ENCODE measurements at regions of chr5 and their contacts with region 1.

Region 1: DNA sequence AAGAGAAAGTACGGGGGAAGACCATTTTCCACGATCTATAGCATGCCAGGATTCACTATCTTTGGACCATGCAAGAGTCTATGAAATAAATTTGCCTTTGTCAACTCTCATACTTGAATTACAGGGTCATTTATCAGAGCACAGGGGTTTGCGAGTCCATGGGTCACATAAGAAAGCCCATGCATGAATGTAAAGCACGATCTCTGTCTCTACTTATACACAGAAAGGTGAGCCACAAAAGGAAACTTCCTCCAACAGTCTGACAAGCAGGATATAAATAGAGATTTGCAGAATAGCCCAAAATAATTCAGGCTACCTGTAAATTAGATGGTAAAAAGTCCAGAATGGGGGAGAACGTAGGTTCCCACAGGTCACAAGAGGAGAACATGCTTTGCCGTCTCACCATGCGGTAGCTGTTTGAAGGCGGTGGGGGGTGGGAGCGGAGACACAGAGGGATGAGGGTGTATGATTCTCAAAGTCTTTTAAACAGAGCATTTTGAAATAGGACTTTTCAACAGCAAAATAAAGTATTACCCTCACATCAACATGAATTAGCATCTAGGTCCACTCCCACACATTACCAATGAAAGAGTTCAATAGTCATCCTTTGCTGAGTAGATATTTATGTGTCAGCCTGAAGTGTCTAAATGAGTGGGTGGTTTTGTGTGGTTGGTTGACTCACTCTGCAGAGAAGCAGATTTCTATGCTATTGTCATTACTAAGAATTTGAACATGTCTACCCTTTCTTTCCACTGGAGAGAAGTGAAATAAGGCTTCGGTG is 279.7 kb downstream of the EBF1 start:
- DNase-seq: peak; percentile 77
- ATAC-seq: peak; percentile 90
- H3K4me3 ChIP-seq: peak overlapping the region; percentile 53
- H3K27ac ChIP-seq: peak overlapping the region; percentile 83
- H3K4me1 ChIP-seq: peaks cover 50% of the 10 kb centered on the region
- H3K27me3 ChIP-seq: no peaks in the 10 kb centered on the region
- CTCF ChIP-seq: no peak
- EP300 ChIP-seq: peak in 1 of 2 experiments; percentile 5; a peak in 1 of 4 replicates
- POLR2A ChIP-seq: no peak
- RAD21 ChIP-seq: peak; percentile 10; the same call in 1 of the 2 replicates

Region 2: GRCh38 chr5:158780656-158781237 is 39.3 kb before region 1 on chr5:
- CTCF ChIA-PET with region 1: interaction called, 7 read pairs
- POLR2A ChIA-PET with region 1: interaction called, 31 read pairs
- RAD21 ChIA-PET with region 1: interaction called, 19 read pairs
- SMC1A ChIA-PET with region 1: interaction called, 18 read pairs
- in situ Hi-C with region 1: no loop called
- intact Hi-C with region 1: no loop called
- DNase-seq: peak; percentile 28
- ATAC-seq: peak; percentile 85
- H3K4me3 ChIP-seq: no peak overlapping the region
- H3K27ac ChIP-seq: peak overlapping the region; percentile 46
- H3K4me1 ChIP-seq: peaks cover 18% of the 10 kb centered on the region
- H3K27me3 ChIP-seq: no peaks in the 10 kb centered on the region
- CTCF ChIP-seq: no peak
- EP300 ChIP-seq: no peak
- POLR2A ChIP-seq: no peak
- RAD21 ChIP-seq: no peak

Region 3: DNA sequence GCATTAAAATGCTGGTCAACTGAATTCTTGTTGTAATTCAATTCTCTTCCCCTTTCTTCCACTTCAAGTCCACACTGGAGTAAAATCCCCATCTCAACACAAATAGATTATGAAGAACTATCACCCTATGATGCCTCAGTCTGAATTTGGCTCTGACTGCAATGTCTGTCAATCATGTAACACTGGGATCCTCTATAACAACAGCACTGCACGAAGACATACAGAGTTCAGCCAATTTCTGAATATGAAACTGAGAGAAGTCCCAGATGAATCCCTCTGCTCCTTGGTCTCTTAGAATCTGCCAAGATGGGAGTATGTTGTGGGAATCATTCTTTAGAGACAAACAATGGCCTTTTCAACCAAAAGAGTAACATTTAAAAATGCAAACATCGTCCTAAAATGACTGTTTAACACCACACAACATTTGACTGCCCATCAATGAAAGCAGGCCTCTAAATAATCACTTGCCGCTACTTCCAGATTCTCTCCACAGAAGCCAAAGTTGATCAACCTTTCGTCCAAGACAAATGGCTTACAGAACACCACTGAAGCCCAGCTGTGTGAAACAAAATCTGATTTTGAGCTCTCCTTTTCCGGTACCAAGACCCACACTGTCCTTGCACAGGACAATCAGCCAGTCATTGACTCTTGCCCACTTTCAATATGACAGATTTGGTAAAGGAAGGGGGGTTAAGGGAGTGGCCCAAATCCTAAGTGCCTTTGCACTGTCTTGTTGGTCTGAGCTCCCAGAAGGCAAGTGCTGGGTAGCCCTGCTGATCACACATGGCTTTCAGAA is 21.6 kb after region 1 on chr5:
- CTCF ChIA-PET with region 1: interaction called, 7 read pairs
- POLR2A ChIA-PET with region 1: interaction called, 9 read pairs
- RAD21 ChIA-PET with region 1: interaction called, 7 read pairs
- SMC1A ChIA-PET with region 1: interaction called, 33 read pairs
- in situ Hi-C with region 1: no loop called
- intact Hi-C with region 1: loop called (anchors 2 kb)
- DNase-seq: peak; percentile 80
- ATAC-seq: peak; percentile 97
- H3K4me3 ChIP-seq: no peak overlapping the region
- H3K27ac ChIP-seq: peak overlapping the region; percentile 15
- H3K4me1 ChIP-seq: peaks cover 22% of the 10 kb centered on the region
- H3K27me3 ChIP-seq: no peaks in the 10 kb centered on the region
- CTCF ChIP-seq: no peak
- EP300 ChIP-seq: no peak
- POLR2A ChIP-seq: no peak
- RAD21 ChIP-seq: 0 out of 2 replicates have a peak, but pooled peaks have one; percentile 5

Region 4: GRCh38 chr5:158880483-158881001 is 60.5 kb after region 1 on chr5:
- CTCF ChIA-PET with region 1: interaction called, 7 read pairs
- POLR2A ChIA-PET with region 1: interaction called, 9 read pairs
- RAD21 ChIA-PET with region 1: interaction called, 77 read pairs
- SMC1A ChIA-PET with region 1: interaction called, 65 read pairs
- in situ Hi-C with region 1: no loop called
- intact Hi-C with region 1: loop called (anchors 2 kb)
- DNase-seq: no peak
- ATAC-seq: peak; percentile 31
- H3K4me3 ChIP-seq: peak overlapping the region; percentile 24; the same call in 1 of the 2 replicates
- H3K27ac ChIP-seq: peak overlapping the region; percentile 83
- H3K4me1 ChIP-seq: peaks cover 66% of the 10 kb centered on the region
- H3K27me3 ChIP-seq: no peaks in the 10 kb centered on the region
- CTCF ChIP-seq: peak in 2 of 3 experiments; percentile 29 to 53; a peak in 3 of 6 replicates
- EP300 ChIP-seq: peak in 1 of 2 experiments; percentile 2; a peak in 1 of 4 replicates
- POLR2A ChIP-seq: no peak
- RAD21 ChIP-seq: peak; percentile 56

Region 5: GRCh38 chr5:158910782-158911692 is 91.0 kb after region 1 on chr5:
- CTCF ChIA-PET with region 1: no interaction called
- POLR2A ChIA-PET with region 1: interaction called, 4 read pairs
- RAD21 ChIA-PET with region 1: interaction called, 12 read pairs
- SMC1A ChIA-PET with region 1: interaction called, 6 read pairs
- in situ Hi-C with region 1: no loop called
- intact Hi-C with region 1: no loop called
- DNase-seq: no peak
- ATAC-seq: peak; percentile 88
- H3K4me3 ChIP-seq: no peak overlapping the region
- H3K27ac ChIP-seq: peak overlapping the region; percentile 50
- H3K4me1 ChIP-seq: peaks cover 32% of the 10 kb centered on the region
- H3K27me3 ChIP-seq: no peaks in the 10 kb centered on the region
- CTCF ChIP-seq: no peak
- EP300 ChIP-seq: peak; percentile 29 to 85; a peak in 2 of 4 replicates
- POLR2A ChIP-seq: no peak
- RAD21 ChIP-seq: no peak

Region 6: GRCh38 chr5:159100025-159100781 is 280.2 kb after region 1 on chr5:
- CTCF ChIA-PET with region 1: interaction called, 4 read pairs
- POLR2A ChIA-PET with region 1: no interaction called
- RAD21 ChIA-PET with region 1: interaction called, 8 read pairs
- SMC1A ChIA-PET with region 1: interaction called, 5 read pairs
- in situ Hi-C with region 1: no loop called
- intact Hi-C with region 1: loop called (anchors 5 kb)
- DNase-seq: peak; percentile 81
- ATAC-seq: peak; percentile 58
- H3K4me3 ChIP-seq: peak overlapping the region; percentile 67
- H3K27ac ChIP-seq: peak overlapping the region; percentile 67
- H3K4me1 ChIP-seq: peaks cover 5% of the 10 kb centered on the region
- H3K27me3 ChIP-seq: no peaks in the 10 kb centered on the region
- CTCF ChIP-seq: no peak
- EP300 ChIP-seq: peak in 1 of 2 experiments; percentile 1; a peak in 2 of 4 replicates
- POLR2A ChIP-seq: peak; percentile 93
- RAD21 ChIP-seq: no peak

Region 7: DNA sequence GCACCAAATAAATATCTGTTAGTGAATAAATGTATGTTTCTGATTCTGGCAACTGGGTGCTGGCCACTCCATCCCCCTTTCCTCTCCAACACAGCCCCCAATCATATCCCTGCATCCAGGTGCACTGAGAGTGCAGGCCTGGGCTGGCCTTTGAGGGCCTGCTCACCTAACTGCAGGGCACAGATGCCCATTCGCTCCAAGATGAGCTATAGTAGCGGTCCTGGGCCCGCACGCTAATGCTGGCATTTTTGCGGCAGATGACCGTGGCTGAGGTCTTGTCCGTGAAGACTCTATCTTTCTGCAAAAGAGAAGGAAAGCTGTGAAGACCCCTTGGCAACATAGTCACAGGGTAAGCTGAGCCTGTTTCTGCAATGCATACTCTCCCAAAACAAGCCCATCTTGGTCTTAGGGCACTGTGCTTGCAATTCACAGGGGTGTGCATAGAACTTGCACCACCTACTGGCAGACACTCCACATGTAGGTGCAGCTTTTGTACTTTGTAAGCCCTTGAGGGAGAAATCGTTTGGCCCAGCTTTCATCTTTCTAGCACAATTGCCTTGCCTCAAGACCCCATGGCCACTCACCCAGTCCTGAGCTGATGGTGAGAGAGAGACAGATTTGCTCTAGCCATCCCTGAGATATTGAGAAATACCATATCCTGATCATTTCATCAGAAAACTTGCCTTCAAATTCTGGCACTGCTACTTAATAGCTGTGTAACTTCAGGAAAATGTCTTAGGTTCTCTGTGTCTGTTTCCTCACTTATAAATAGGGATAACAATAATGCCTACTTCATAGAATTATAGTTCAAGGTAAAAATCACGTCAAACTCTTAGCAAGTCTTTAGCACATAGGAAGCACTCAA is 496.7 kb after region 1 on chr5:
- CTCF ChIA-PET with region 1: no interaction called
- POLR2A ChIA-PET with region 1: no interaction called
- RAD21 ChIA-PET with region 1: no interaction called
- SMC1A ChIA-PET with region 1: no interaction called
- in situ Hi-C with region 1: no loop called
- intact Hi-C with region 1: no loop called
- DNase-seq: no peak
- ATAC-seq: peak; percentile 98
- H3K4me3 ChIP-seq: no peak overlapping the region
- H3K27ac ChIP-seq: no peak overlapping the region
- H3K4me1 ChIP-seq: no peaks in the 10 kb centered on the region
- H3K27me3 ChIP-seq: no peaks in the 10 kb centered on the region
- CTCF ChIP-seq: peak; percentile 73 to 77 (median 76)
- EP300 ChIP-seq: no peak
- POLR2A ChIP-seq: no peak
- RAD21 ChIP-seq: peak; percentile 75

Measured in GM12878 (cell line).